ENCODE measurements at regions of chr12 and their contacts with region 1.

Region 1: GRCh38 chr12:27179400-27180214 is 64.5 kb upstream of the STK38L start:
- DNase-seq: peak; percentile 59
- CTCF ChIP-seq: no peak

Region 2: GRCh38 chr12:26566675-26567074 is 612.9 kb before region 1 on chr12:
- CTCF ChIA-PET with region 1: no interaction called
- POLR2A ChIA-PET with region 1: no interaction called
- DNase-seq: no peak
- CTCF ChIP-seq: no peak

Region 3: DNA sequence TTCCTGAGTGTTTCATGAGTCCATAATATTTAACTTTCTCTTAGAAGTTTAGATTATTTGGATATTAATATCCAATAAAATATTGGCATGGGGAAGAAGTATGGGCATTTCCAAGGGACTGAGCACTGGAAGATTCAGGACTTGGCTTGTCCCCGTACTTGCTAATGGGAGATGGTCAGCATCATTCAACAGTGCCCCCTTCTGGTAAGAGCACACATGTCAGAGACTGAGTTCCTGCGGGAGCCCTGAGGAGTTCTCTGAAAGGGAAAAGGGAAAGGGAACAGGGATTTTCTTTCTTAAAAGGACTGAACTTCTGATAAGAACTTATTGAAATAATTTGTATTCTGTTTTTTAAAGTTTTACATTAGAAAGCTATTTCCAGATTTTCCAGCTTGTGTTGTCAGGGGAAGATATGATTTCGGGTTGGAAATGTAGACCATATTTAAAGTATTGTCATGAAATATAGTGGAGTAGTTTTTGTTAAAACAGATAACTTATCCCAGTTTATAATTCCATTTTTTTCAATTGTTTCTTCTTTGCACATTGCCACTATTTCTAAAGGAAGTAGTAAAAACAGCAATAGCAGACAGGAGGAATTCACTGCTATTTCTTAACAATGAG is 37.4 kb before region 1 on chr12:
- CTCF ChIA-PET with region 1: interaction called, 12 read pairs
- POLR2A ChIA-PET with region 1: no interaction called
- DNase-seq: peak; percentile 50
- CTCF ChIP-seq: peak; percentile 73

Region 4: GRCh38 chr12:27193854-27194544 is 14.4 kb after region 1 on chr12:
- CTCF ChIA-PET with region 1: interaction called, 25 read pairs
- POLR2A ChIA-PET with region 1: no interaction called
- DNase-seq: no peak
- CTCF ChIP-seq: no peak

Measured in GM10248 (cell line).